ENCODE measurements at regions of chr18 and their contacts with region 1.

Region 1: GRCh38 chr18:35240664-35241447 is at the start of gene ZNF397:
- DNase-seq: peak; percentile 99
- H3K4me3 Mint-ChIP-seq: peak within 1 kb of the TSS; percentile 96
- H3K27ac Mint-ChIP-seq: peak within 1 kb of the TSS; percentile 98
- H3K4me1 Mint-ChIP-seq: peaks cover 12% of the 10 kb centered on the region
- H3K27me3 Mint-ChIP-seq: no peaks in the 10 kb centered on the region
- total RNA-seq, gene ZNF397: 19.2 and 22.6 TPM in 2 replicates

Region 2: DNA sequence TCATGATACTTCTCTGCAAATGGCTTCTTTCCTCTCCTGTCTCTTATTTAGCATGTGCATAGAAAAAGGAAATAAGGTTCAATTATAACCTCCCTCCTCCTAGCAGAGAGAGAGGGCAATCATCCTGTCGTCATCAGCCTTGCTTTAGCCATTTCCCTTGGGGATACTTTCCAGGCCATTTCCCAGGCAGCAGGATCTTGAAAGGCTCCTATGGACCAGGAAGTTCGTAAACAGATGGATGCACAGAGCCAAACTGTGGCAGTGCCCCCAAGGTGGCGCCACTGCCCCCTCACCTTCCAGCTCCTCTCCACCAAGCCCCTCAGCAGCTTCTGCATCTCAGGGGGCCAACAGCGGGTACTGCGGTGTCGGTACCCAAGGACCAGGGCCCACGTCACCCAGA is 373.3 kb before region 1 on chr18:
- intact Hi-C with region 1: loop called (anchors 1 kb)
- DNase-seq: no peak
- H3K4me3 Mint-ChIP-seq: no peak overlapping the region
- H3K27ac Mint-ChIP-seq: peak overlapping the region; percentile 26
- H3K4me1 Mint-ChIP-seq: peaks cover 26% of the 10 kb centered on the region
- H3K27me3 Mint-ChIP-seq: peaks cover 6% of the 10 kb centered on the region

Region 3: DNA sequence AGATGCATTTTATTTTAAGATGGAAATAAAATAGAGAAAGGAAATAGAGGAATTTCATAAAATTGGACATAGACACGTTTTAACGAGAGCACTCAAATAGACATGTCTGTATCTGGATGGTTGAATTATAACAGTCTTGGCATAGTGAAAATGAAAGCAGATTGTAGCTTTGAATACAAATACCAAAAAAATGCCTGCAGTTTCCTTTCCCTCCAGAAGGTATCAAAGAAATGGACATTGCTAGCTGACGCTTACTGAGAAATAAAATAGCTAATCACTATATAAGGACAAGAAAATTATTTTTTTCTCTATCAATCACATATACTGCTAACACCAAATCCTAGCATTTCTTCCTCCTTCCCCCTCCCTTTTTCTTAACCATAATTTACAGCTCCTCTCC is 211.1 kb before region 1 on chr18:
- intact Hi-C with region 1: loop called (anchors 5 kb)
- DNase-seq: no peak
- H3K4me3 Mint-ChIP-seq: peak overlapping the region; percentile 89
- H3K27ac Mint-ChIP-seq: peak overlapping the region; percentile 97
- H3K4me1 Mint-ChIP-seq: peaks cover 40% of the 10 kb centered on the region
- H3K27me3 Mint-ChIP-seq: no peaks in the 10 kb centered on the region

Region 4: GRCh38 chr18:35267161-35267651 is 26.4 kb after region 1 on chr18:
- intact Hi-C with region 1: loop called (anchors 1 kb)
- DNase-seq: peak; percentile 79
- H3K4me3 Mint-ChIP-seq: peak overlapping the region; percentile 83
- H3K27ac Mint-ChIP-seq: peak overlapping the region; percentile 86
- H3K4me1 Mint-ChIP-seq: peaks cover 13% of the 10 kb centered on the region
- H3K27me3 Mint-ChIP-seq: no peaks in the 10 kb centered on the region

Region 5: DNA sequence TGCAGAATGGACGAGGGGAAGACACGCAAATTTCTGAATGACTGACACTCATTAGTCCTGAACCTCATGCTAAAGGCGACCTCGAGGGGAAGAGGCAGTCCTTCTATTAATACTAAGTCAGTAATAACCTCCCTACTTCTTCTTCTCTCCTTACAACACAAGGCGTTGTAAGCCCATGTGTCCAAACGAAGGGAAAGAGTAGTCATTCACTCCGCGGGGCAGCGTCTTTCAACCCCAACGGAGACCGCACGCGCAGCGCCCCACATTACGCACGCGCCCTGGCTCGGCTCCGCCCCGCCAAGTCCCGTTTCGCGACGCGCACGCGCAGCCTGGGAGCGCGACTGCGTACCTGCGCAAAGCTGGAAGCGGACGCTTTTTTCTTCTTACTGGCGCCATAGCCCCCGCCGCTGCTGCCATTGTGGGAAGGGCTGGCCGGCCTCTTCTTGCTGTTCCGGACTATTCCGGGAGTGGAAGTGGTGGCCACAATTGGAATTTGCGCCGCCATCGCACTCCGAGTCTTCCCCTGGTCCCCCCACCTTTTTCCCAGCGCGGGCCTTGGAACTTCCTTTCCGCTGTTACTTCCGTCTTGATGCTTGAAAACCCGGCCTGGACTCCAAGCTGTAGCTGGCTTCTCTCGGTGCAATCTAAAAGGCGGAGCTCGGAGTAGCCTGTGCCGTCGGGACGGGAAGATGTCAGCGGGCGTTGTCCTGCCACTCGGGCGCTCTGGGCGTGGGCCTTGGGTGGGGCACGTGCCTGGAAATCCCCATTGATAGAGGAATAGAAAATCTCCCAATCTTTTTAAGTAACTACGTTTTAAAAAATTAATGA is 256.7 kb after region 1 on chr18 and contains the start of gene INO80C:
- intact Hi-C with region 1: loop called (anchors 5 kb)
- DNase-seq: peak; percentile 98
- H3K4me3 Mint-ChIP-seq: peak within 1 kb of the TSS; percentile 95
- H3K27ac Mint-ChIP-seq: peak within 1 kb of the TSS; percentile 99
- H3K4me1 Mint-ChIP-seq: peaks cover 32% of the 10 kb centered on the region
- H3K27me3 Mint-ChIP-seq: peaks cover 3% of the 10 kb centered on the region
- total RNA-seq, gene INO80C: 34.7 and 37.6 TPM in 2 replicates

Region 6: DNA sequence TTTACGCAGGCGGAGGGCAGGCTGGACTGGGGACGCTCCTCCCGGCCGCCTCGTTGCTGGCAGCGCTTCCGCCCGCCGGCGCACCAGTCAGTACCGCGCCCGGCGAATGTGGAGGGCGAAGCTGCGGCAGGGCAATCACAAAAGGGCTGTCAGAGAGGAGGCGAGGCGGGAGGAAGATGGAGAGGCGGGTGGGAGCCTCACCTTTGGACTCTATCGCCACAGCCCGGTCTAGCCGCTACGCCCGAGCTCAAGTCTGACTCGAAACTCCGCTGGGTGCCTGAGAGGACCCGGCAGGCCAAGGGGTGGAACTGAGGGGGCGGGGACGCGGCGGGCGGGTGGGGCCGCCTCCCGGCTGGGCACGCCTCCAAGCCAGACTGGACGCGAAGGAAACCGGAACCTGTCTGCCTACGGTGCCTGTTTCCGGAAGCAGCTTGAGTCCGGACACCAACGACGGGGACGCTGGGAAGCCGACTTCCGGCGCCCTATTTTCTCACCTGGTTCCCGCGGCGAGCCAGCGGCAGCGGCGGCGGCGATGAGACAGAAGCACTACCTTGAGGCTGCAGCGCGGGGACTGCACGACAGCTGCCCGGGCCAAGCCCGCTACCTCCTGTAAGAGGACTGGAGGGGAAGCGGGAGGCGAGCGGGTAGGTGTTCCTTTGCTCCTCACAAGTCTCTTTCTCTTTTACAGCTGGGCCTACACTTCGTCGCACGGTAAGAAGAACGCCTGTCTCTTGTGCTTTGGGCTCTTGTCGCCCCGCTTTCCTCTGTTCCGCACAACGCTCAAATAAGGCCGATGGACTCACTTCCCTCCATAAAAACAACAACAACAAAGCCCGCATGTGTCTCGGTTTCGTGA is 731.6 kb after region 1 on chr18 and contains the start of gene RMP24:
- intact Hi-C with region 1: loop called (anchors 1 kb)
- DNase-seq: peak; percentile 97
- H3K4me3 Mint-ChIP-seq: peak within 1 kb of the TSS; percentile 99
- H3K27ac Mint-ChIP-seq: peak within 1 kb of the TSS; percentile 92
- H3K4me1 Mint-ChIP-seq: peaks cover 43% of the 10 kb centered on the region
- H3K27me3 Mint-ChIP-seq: no peaks in the 10 kb centered on the region